ENCODE measurements at regions of chr3 and their contacts with region 1.

Region 1: GRCh38 chr3:4712143-4712542 is 219.0 kb downstream of the ITPR1 start:
- DNase-seq: no peak
- H3K4me3 ChIP-seq: no peak overlapping the region
- H3K27ac ChIP-seq: no peak overlapping the region
- H3K4me1 ChIP-seq: peaks cover 0 to 36% (median 10%) of the 10 kb centered on the region in 6 donors
- H3K27me3 ChIP-seq: no peaks in the 10 kb centered on the region
- CTCF ChIP-seq: no peak
- POLR2A ChIP-seq: no peak

Region 2: DNA sequence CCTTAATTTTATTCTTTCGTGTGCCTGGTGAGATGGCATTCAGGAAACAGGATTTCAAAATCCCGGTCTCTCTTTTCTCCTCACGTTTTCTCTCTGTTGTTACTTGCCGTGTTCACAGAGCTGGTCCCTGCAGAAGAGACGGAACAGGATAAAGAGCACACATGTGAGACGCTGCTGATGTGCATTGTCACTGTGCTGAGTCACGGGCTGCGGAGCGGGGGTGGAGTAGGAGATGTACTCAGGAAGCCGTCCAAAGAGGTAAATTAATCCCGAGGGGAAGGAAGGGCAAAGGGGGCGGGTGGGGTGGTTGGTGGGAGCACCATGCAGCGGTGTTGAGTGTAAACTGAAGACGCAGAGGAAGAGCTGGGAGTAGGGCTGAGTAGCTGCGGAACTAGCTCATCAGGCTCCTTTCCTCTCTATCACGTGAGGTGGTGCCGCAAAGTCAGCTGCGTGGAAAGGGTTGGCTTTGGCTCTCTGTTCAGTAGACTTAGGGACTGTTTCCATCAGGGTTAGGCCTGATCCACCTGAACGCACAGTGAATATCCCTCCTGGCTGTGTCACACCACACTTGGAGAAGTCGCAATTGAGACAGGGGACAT is 102.3 kb after region 1 on chr3:
- intact Hi-C with region 1: loop called (anchors 10 kb)
- DNase-seq: peak; percentile 83
- H3K4me3 ChIP-seq: peak overlapping the region in 1 of 8 donors; percentile 41
- H3K27ac ChIP-seq: peak overlapping the region in 4 of 8 donors; percentile 30 to 75 (median 58)
- H3K4me1 ChIP-seq: peaks cover 0 to 18% (median 3%) of the 10 kb centered on the region in 6 donors
- H3K27me3 ChIP-seq: no peaks in the 10 kb centered on the region
- CTCF ChIP-seq: no peak
- POLR2A ChIP-seq: no peak

Region 3: DNA sequence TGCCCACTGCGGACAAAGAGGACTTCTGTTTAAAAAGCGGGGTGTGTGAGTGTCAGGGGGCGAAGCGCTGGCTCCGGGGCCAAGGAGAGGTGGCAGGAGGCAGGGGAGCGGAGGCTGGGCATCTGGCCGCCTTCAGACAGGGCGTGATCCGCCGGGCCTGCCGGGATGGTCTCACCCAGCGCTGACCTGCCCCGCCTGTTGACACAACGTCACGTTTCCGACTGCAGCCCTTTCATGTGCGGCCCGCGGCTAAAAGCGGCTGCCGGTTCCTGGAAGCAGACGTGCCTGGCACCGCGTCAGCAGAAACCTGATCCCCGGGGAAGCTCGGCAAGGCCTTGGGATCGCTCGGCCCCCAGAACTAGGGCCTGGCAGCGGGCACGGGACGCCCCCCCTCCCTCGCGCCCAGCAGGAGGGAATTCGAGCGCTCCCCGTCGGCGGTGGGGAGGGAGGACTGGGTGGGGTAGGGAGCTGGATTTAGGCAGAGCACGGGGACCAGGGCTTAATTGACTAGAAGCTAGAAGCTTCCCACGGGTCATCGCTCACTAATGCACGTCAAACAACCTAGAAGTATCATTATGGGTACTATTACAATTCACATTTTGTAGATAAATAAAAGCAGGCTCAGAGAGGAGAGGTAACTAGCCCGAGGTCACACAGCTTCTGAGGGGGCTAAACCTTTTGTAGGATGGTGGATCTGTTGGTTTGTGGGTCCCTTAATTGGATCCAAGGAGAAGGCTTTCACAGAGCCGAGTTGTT is 274.8 kb after region 1 on chr3:
- intact Hi-C with region 1: loop called (anchors 10 kb)
- DNase-seq: peak; percentile 97
- H3K4me3 ChIP-seq: peak overlapping the region in 7 of 8 donors; percentile 20 to 70 (median 40)
- H3K27ac ChIP-seq: peak overlapping the region; percentile 61 to 99 (median 98)
- H3K4me1 ChIP-seq: peaks cover 45 to 89% (median 62%) of the 10 kb centered on the region in 6 donors
- H3K27me3 ChIP-seq: no peaks in the 10 kb centered on the region
- CTCF ChIP-seq: peak in 5 of 11 experiments; percentile 4 to 25 (median 10)
- POLR2A ChIP-seq: peak in 1 of 3 donors; percentile 43

Region 4: GRCh38 chr3:5026331-5027218 is 314.4 kb after region 1 on chr3:
- intact Hi-C with region 1: loop called (anchors 10 kb)
- DNase-seq: peak; percentile 89
- H3K4me3 ChIP-seq: peak overlapping the region in 7 of 8 donors; percentile 33 to 71 (median 42)
- H3K27ac ChIP-seq: peak overlapping the region in 7 of 8 donors; percentile 58 to 78 (median 72)
- H3K4me1 ChIP-seq: peaks cover 0 to 22% (median 14%) of the 10 kb centered on the region in 6 donors
- H3K27me3 ChIP-seq: no peaks in the 10 kb centered on the region
- CTCF ChIP-seq: peak in 10 of 11 experiments; percentile 34 to 87 (median 72)
- POLR2A ChIP-seq: no peak

Region 5: GRCh38 chr3:5057857-5058324 is 345.7 kb after region 1 on chr3:
- intact Hi-C with region 1: loop called (anchors 5 kb)
- DNase-seq: peak; percentile 84
- H3K4me3 ChIP-seq: no peak overlapping the region
- H3K27ac ChIP-seq: peak overlapping the region in 2 of 8 donors; percentile 18 to 26
- H3K4me1 ChIP-seq: peaks cover 11 to 54% (median 33%) of the 10 kb centered on the region in 6 donors
- H3K27me3 ChIP-seq: peaks cover 0 to 4% (median 0%) of the 10 kb centered on the region in 7 donors
- CTCF ChIP-seq: peak; percentile 52 to 89 (median 80)
- POLR2A ChIP-seq: no peak

Region 6: GRCh38 chr3:5217824-5218595 is 505.9 kb after region 1 on chr3:
- intact Hi-C with region 1: no loop called
- DNase-seq: no peak
- H3K4me3 ChIP-seq: no peak overlapping the region
- H3K27ac ChIP-seq: no peak overlapping the region
- H3K4me1 ChIP-seq: no peaks in the 10 kb centered on the region
- H3K27me3 ChIP-seq: no peaks in the 10 kb centered on the region
- CTCF ChIP-seq: no peak
- POLR2A ChIP-seq: no peak

Measured in spleen (tissue), 13 donors.